Activated CD4-positive, alpha-beta memory T cell treated with anti-CD3 and anti-CD28 coated beads for 36 hours (primary cell): ENCODE measurements at regions of chr9 and their contacts with region 1.

Region 1: DNA sequence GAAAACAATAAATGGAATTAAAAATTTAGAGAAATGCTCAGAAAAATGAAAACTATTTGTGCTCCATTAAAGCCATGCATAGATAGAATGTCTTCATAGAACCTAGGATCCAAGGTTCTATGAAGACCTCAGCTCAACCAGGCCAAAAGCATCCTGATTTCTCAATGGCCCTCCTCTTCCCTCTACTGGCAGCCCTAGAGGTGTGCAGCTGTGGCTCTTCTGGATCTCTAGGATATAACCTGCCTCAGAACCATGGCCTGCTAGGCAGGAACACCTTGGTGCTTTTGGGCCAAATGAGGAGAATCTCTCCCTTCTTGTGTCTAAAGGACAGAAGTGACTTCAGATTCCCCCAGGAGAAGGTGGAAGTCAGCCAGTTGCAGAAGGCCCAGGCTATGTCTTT is 15.1 kb downstream of the IFNA1 start:
- DNase-seq: no peak
- H3K4me3 Mint-ChIP-seq: no peak overlapping the region
- H3K27ac Mint-ChIP-seq: no peak overlapping the region
- H3K4me1 Mint-ChIP-seq: no peaks in the 10 kb centered on the region
- H3K27me3 Mint-ChIP-seq: peaks cover 5% of the 10 kb centered on the region

Region 2: GRCh38 chr9:21239911-21240310 is 215.4 kb before region 1 on chr9 and contains the start of gene IFNA14:
- CTCF ChIA-PET with region 1: interaction called, 11 read pairs
- POLR2A ChIA-PET with region 1: no interaction called
- intact Hi-C with region 1: no loop called
- DNase-seq: no peak
- H3K4me3 Mint-ChIP-seq: no peak within 1 kb of the TSS
- H3K27ac Mint-ChIP-seq: no peak within 1 kb of the TSS
- H3K4me1 Mint-ChIP-seq: peaks cover 9% of the 10 kb centered on the region
- H3K27me3 Mint-ChIP-seq: peaks cover 11% of the 10 kb centered on the region
- total RNA-seq, gene IFNA14: not detected

Region 3: DNA sequence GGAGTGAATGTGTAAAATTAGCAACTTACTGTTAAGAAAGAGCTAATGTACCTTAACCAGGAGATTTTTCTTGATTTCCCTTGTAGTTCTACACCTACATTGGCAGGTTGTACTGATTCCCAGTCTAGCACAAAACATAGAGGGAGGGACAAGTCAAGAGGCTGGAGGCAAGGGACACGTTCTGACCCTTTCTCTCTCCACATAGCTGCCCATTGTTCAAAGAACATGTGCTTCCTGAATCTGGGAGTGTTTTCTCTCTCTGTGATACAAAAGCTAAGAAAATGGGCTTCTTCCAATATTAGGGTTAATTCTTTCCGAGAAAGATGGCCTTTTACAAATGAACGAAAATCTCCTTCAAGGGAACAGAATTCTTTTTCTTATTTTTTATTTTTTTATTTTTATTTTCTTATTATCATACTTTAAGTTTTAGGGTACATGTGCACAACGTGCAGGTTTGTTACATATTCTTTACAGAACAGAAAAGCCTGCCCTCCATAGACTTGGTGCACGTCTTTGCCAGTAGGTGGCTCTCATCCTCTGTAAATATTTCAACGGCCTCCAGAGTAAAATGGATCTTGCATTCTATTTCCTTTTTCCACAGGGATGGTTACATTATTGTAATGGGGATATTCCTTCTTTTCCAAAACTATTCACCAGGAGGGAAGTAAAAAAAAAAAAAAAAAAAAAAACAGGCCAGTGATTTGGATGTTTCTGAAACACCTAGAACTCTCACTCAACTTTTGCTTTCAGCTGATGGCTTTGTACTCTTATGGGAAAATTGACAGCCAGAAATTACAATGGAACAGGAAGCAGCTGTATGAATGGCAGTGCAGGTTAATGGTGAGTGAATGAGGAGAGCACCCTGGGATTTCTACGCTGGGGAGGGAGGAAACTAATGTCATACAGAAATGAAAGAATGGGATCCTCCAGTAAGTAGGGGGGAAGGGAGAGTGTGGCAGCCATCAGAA is 137.1 kb before region 1 on chr9:
- CTCF ChIA-PET with region 1: interaction called, 15 read pairs
- POLR2A ChIA-PET with region 1: no interaction called
- intact Hi-C with region 1: loop called (anchors 2 kb)
- DNase-seq: peak; percentile 48
- H3K4me3 Mint-ChIP-seq: no peak overlapping the region
- H3K27ac Mint-ChIP-seq: no peak overlapping the region
- H3K4me1 Mint-ChIP-seq: peaks cover 1% of the 10 kb centered on the region
- H3K27me3 Mint-ChIP-seq: no peaks in the 10 kb centered on the region

Region 4: DNA sequence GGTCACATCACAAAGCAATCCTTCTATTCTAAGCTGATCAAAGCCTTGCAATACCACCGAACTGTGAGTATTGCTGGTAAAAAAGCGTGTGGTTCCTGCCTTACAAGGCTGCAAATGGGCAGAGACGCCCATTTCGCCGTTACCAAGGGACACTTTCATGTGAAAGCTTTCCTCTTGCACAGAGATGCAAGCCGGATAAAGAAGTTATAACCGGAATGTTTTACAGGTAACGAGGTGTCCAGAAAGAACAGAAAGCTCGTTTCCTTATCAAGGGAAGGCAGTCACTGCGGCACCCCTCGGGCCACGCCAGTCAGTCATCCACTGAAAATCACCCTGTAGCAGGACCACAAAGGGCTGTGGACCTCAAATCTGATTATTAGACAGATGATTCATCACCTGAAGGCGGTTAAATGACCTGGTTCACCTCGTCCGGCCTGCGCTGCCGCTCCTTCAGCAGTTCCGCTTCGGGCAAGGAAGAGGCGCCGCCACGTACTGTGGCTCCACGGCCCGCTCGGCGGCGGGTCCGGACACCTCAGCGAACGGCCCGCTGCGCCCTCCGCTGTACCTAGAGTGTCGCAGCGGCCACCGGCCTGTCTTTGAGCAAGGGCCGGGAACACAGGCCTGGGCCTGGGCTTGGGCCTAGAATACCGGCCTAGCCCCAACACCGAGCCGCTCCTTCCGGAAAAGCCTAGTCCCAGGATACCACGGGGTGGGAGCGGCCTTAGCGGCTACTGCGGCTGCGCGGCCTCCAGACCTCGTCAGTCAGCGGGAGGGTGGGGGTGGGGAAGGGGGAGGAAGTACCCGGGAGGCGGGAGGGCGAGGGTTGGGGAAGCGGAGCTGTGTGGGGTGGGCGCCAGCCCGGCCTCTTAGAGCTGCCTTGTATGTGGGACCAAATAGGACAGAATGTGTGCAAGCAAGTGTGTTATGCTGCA is 120.4 kb before region 1 on chr9 and contains the start of gene KLHL9:
- CTCF ChIA-PET with region 1: interaction called, 12 read pairs
- POLR2A ChIA-PET with region 1: no interaction called
- intact Hi-C with region 1: no loop called
- DNase-seq: peak; percentile 92
- H3K4me3 Mint-ChIP-seq: peak within 1 kb of the TSS; percentile 86
- H3K27ac Mint-ChIP-seq: peak within 1 kb of the TSS; percentile 87
- H3K4me1 Mint-ChIP-seq: peaks cover 50% of the 10 kb centered on the region
- H3K27me3 Mint-ChIP-seq: no peaks in the 10 kb centered on the region
- total RNA-seq, gene KLHL9: 15.9 to 16.0 TPM

Region 5: DNA sequence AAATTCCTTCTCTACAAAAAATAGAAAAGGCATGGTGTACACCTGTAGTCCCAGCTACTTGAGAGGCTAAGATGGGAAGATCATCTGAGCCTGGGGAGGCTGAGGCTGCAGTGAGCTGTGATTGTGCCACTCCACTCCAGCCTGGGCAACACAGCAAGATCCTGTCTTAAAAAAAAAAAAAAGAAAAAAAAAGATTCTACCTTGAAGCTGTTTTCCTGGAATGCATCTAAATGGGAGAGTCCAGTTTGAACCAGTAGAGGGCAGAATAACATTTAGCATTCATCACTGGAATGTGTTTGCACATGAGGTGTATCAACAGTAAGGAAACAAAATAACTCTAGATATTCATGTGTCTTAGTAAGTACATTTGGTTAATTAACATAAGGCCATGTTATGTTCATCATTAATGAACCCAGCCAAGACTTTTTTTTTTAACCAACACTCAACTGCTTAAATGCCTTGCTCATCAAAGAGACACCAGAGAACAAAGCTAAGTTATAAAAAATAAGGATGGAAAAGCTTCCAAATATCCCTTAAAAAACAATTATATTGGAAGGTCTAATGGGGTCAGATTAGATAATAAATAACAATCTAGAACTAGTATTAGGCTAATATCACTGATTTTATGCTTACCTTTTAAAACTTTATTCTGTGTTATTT is 10.7 kb after region 1 on chr9:
- CTCF ChIA-PET with region 1: interaction called, 16 read pairs
- POLR2A ChIA-PET with region 1: no interaction called
- intact Hi-C with region 1: no loop called
- DNase-seq: no peak
- H3K4me3 Mint-ChIP-seq: no peak overlapping the region
- H3K27ac Mint-ChIP-seq: no peak overlapping the region
- H3K4me1 Mint-ChIP-seq: no peaks in the 10 kb centered on the region
- H3K27me3 Mint-ChIP-seq: peaks cover 4% of the 10 kb centered on the region